ENCODE measurements at regions of chr14 and their contacts with region 1.

Region 1: DNA sequence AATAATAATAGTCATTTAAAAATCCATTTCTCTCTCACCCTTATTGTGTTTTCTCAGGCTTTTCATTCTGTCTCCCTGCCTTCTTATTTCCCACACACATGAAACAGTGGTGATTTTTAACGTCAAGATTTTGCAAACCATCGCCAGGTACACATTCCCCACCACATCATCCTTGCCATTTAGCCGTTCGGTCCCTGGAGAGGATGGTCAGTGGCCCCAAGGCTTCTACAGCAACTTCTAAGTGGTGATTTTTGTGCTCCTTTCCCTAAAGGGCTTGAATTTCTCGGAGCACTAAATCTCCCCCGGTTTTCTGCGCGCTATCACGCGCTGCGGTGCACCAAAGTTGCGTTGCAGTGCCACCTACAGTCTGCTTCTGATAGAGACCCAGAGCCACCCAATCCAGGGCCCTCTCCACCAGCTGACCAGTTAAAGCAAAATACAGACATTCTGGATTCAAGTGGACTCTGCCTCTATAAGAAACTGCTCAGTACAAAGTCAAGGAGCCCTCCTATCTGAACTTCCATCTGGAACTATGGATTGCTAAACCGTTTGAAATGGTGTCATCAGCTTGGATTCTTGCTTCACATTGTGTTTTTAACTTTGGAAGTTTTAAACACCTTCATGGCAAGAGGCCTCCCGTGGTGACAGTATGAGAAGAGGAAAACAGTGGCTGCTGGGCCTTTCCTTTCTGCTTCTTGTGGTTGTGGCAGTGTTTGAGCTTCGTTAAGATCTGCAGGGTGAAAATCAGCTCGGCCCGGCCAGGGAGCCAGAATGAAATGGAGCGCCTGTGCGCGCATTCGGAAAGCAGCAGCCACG is 234.0 kb downstream of the SPTSSA start:
- DNase-seq: peak; percentile 81
- ATAC-seq: peak; percentile 93
- H3K4me3 Mint-ChIP-seq: no peak overlapping the region
- H3K27ac Mint-ChIP-seq: no peak overlapping the region
- H3K4me1 Mint-ChIP-seq: peaks cover 6% of the 10 kb centered on the region
- H3K27me3 Mint-ChIP-seq: peaks cover 10% of the 10 kb centered on the region

Region 2: DNA sequence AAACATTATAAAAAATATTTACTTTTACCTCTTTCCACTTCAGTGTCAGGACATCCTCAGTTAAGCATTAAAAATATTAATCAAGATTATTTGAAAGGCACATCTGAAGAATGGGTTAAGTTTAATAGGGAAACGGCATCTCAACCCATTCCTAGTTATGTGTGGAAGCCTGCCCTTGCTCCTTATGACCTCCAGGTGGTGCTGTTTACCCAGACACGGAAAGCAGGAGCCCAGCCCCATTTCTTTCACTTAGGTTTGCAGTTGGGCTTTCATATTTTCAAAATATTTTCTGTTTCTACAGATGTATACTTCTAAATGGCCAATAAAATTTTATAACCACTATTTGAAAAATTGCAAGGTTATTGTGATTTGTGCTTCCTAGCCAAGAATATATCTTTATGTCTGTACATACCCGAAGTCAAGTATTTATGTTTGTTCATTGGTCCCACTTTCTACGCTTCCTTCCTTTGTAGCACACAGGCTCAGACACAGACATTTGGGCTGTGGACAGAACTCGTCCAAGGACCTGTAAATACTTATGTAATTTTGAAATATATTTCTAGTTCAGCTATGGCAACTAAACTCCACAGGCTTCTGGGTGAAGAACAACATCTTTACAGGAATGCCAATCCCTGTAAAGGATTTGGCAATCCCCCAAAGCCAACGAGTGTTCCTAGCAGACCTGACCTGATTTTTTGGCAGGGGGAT is 1651.8 kb before region 1 on chr14:
- CTCF ChIA-PET with region 1: no interaction called
- POLR2A ChIA-PET with region 1: no interaction called
- intact Hi-C with region 1: loop called (anchors 5 kb)
- DNase-seq: peak; percentile 46
- ATAC-seq: no peak
- H3K4me3 Mint-ChIP-seq: no peak overlapping the region
- H3K27ac Mint-ChIP-seq: no peak overlapping the region
- H3K4me1 Mint-ChIP-seq: no peaks in the 10 kb centered on the region
- H3K27me3 Mint-ChIP-seq: peaks cover 12% of the 10 kb centered on the region

Region 3: GRCh38 chr14:33839193-33840076 is 388.6 kb before region 1 on chr14:
- CTCF ChIA-PET with region 1: interaction called, 23 read pairs
- POLR2A ChIA-PET with region 1: no interaction called
- intact Hi-C with region 1: loop called (anchors 1 kb)
- DNase-seq: peak; percentile 68
- ATAC-seq: peak; percentile 53
- H3K4me3 Mint-ChIP-seq: no peak overlapping the region
- H3K27ac Mint-ChIP-seq: no peak overlapping the region
- H3K4me1 Mint-ChIP-seq: no peaks in the 10 kb centered on the region
- H3K27me3 Mint-ChIP-seq: no peaks in the 10 kb centered on the region

Region 4: GRCh38 chr14:33950320-33951182 is 277.5 kb before region 1 on chr14 and contains the start of gene EGLN3:
- CTCF ChIA-PET with region 1: no interaction called
- POLR2A ChIA-PET with region 1: no interaction called
- intact Hi-C with region 1: loop called in 1 of 2 experiments (anchors 2 kb)
- DNase-seq: peak; percentile 78
- ATAC-seq: peak; percentile 93
- H3K4me3 Mint-ChIP-seq: peak within 1 kb of the TSS; percentile 77
- H3K27ac Mint-ChIP-seq: peak within 1 kb of the TSS; percentile 55
- H3K4me1 Mint-ChIP-seq: peaks cover 22% of the 10 kb centered on the region
- H3K27me3 Mint-ChIP-seq: peaks cover 45% of the 10 kb centered on the region
- total RNA-seq, gene EGLN3: 3.8 to 3.9 TPM

Region 5: DNA sequence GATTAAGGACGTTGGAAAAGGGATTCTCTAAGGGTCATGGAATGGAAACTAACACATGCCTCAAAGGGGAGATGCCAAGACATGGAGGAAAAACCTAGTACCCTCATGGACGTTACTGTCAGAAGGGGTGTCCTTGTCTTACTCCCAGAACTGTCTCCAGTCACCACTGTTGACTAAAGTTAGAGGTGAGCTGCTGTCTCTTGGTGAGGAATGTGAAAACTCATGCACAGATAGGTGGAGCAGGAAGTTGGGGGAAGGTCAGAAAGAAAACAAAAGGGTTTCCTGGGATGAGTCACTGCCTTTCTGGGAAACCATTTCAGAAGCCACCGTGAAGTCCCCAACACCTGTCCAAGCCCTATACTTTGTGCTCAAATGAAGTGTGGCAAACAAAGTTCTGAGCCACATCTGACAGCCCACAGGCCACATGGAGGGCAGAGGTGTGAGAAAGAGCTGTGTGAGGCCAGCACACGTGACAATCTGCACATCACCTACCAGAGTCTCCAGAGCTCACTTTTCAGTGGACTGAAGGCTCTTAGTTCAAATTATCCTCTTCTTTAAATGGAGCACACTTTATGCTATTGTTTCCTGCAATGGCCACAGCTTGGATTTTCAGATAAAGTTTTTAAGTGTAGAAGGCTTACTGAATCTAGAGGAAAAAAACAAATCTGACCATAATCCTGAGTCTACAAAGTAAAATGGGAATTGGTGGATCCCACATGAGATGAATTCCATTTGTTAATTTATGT is 184.2 kb before region 1 on chr14:
- CTCF ChIA-PET with region 1: interaction called, 3 read pairs
- POLR2A ChIA-PET with region 1: no interaction called
- intact Hi-C with region 1: loop called in 1 of 2 experiments (anchors 5 kb)
- DNase-seq: peak; percentile 91
- ATAC-seq: peak; percentile 94
- H3K4me3 Mint-ChIP-seq: no peak overlapping the region
- H3K27ac Mint-ChIP-seq: peak overlapping the region; percentile 87
- H3K4me1 Mint-ChIP-seq: peaks cover 42% of the 10 kb centered on the region
- H3K27me3 Mint-ChIP-seq: peaks cover 1% of the 10 kb centered on the region

Region 6: DNA sequence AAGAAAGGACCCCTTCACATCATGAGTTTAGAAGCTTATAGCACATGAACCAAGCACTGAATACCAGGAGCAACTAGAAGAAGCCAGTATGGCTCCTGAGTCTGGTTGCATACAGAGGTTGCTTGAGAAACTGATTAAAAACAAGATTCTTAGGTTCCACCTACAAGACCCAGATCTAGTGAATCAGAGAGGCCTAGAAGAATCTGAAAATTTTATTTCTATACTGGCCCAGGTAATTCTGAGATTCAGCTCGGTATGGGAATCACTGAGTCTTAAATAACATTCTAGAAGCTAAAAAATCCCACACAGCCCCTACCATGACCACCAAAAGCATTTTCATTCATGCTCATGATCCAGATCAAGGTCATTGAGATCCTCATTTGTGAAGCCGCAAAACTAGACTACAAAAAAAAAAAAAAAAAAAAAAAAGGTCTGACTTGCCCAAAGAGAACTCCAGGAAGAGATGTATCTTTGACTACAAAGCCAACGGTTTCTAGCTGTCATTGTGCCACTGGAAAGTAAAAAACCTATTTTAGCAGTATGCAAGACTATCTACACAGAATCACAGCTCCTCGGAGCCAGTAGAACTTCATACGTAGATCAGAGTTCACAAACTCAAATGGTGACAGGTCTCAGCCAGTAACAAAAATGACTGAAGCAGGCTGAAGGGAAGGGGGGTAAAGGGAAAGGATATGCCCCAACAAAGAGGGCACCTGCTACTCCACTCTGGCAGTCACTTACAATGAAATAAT is 108.8 kb before region 1 on chr14:
- CTCF ChIA-PET with region 1: no interaction called
- POLR2A ChIA-PET with region 1: no interaction called
- intact Hi-C with region 1: loop called in 1 of 2 experiments (anchors 5 kb)
- DNase-seq: peak; percentile 11
- ATAC-seq: peak; percentile 91
- H3K4me3 Mint-ChIP-seq: no peak overlapping the region
- H3K27ac Mint-ChIP-seq: no peak overlapping the region
- H3K4me1 Mint-ChIP-seq: peaks cover 12% of the 10 kb centered on the region
- H3K27me3 Mint-ChIP-seq: peaks cover 9% of the 10 kb centered on the region

Region 7: GRCh38 chr14:34211732-34212131 is 16.3 kb before region 1 on chr14:
- CTCF ChIA-PET with region 1: interaction called, 10 read pairs
- POLR2A ChIA-PET with region 1: no interaction called
- intact Hi-C with region 1: no loop called
- DNase-seq: peak; percentile 16
- ATAC-seq: peak; percentile 81
- H3K4me3 Mint-ChIP-seq: peak overlapping the region; percentile 19
- H3K27ac Mint-ChIP-seq: peak overlapping the region; percentile 45
- H3K4me1 Mint-ChIP-seq: peaks cover 19% of the 10 kb centered on the region
- H3K27me3 Mint-ChIP-seq: peaks cover 26% of the 10 kb centered on the region